ENCODE measurements at regions of chr16 and their contacts with region 1.

Region 1: DNA sequence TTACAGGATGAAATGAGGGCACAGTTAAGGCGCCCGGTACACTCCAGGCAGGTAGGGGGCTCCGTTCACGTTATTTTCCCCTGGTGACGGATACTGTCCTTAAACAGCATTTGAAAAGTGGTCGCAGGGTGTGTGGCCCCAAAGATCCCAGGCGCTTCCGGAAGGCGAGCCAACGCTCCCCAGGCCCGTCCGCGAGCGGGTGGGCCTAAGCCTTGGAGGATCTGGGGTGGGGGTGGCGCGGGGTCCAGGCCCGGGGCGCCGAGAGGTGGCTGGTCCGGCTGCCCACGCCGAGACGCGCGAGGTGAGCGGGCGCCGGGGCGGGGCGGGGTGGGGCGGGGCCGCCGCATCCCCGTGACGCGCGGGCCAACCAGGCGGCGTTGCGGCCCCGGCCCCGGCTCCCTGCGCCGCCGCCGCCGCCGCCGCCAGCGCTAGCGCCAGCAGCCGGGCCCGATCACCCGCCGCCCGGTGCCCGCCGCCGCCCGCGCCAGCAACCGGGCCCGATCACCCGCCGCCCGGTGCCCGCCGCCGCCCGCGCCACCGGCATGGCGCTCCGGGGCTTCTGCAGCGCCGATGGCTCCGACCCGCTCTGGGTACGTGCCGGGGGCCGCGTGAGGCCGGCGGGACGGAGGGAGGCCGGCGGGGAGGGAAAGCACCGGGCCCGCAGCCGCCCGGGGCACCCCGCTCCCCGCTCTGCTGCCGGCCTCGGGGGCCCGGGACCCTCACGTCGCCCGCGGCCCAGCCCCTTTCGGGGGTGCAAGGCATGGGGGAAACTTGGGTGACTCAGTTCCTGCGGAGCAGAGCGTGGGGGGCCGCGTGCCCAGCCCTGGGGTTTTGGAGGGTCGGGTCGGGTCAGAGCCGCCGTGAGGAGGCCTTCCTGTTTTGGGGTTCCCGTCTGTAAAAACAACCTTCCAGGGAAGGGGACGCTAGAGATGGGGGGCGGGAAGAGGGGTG is at the start of gene ABCC1:
- DNase-seq: no peak
- ATAC-seq: peak; percentile 82
- total RNA-seq, gene ABCC1: 24.5 TPM

Region 2: DNA sequence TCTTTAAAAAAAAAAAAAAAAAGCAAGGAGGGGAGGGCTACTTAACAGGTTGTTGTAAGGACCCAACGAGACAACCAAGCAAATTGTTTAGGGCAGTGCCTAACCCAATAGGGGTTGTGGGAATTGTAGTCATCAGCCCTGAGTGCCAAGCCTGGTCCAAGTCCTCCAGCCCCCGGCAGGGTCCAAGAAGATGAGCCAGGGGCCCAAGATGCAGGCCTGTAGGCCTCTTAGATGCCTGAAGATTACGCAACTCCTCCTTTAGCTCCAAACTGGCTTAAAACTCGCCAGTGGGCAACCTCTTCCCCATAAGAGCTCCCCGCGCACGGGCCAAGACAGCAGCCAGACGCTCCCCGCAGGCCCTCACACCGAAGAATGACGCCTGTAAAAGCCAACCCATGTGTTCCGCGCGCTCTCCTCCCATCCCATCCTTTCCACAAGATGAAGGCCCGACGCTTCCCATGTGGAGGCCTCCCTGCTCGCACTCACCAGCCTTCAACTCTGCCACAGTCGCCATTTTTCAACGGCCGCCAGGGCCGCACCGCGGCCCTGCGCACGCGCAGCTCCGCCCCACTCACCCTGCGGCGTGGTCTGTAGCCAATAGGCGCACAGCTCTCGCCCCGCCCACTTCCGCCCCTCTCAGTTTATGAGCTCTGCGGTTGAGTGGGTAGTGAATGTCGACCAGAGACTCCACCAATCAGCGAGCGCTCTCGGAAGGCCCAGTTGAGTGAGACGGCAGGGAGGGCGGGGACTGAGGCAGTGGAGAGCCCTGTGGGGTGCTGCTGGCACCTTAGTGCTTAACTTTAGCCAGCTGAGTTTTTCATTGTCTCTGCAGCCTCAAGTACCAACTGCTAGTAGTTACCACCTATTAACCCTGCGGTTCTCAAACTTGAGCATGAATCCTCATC is 61.2 kb before region 1 on chr16 and contains the start of gene CEP20:
- intact Hi-C with region 1: loop called (anchors 5 kb)
- DNase-seq: peak; percentile 100
- ATAC-seq: peak; percentile 100
- total RNA-seq, gene CEP20: 32.0 TPM

Region 3: GRCh38 chr16:16021988-16022682 is 72.7 kb after region 1 on chr16:
- intact Hi-C with region 1: loop called (anchors 5 kb)
- DNase-seq: peak; percentile 95
- ATAC-seq: peak; percentile 98

Region 4: DNA sequence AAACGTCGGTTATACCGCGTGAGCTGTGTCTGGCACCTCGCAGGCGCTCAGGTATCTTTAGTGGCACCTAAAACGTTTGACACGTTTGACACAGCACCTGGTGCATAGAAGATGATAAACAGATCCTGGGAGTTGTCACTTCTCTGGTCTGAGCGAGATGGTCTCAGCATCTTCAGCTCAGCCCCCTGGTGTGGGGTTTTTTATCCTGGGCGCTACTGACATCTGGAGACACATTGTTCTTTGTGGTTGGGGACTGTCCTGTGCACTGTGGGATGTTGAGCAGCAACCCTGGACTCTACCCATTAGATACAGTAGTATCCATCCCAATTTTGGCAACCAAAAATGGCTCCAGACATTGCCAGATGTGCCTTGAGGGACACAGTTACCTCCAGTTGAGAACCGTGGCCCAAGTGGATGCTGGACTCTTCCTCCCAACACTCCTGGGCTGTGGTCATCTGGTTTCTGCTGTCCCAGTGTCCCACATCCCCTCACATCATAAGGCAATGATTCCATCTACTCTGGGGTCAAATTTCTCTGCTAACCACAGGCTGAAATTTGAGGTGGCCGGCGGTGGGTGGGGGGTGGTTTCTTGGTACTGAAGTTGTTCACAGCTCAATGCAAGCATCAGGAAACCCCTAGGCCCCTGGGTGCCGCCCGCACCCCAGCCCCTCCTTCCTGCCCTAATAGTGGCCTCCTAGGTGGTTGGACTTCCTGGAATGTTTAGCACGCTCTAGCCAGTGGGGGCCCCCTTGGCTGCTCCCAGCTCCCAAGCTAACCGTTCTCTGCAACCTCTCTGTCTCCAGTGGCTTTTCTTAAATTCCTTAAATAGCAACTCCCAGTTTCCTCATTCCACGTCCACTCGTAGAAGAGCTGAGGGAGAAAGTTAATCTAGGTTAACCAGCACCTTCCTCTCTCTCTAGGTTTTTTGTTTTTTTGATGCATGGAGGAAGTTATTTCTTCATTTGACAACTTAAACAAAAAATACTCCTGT is 124.7 kb after region 1 on chr16:
- intact Hi-C with region 1: loop called (anchors 5 kb)
- DNase-seq: no peak
- ATAC-seq: peak; percentile 42

Measured in Right ventricle myocardium inferior (tissue), 1 donor.